PC-3 (cell line): ENCODE measurements at regions of chr1 and their contacts with region 1.

Region 1: DNA sequence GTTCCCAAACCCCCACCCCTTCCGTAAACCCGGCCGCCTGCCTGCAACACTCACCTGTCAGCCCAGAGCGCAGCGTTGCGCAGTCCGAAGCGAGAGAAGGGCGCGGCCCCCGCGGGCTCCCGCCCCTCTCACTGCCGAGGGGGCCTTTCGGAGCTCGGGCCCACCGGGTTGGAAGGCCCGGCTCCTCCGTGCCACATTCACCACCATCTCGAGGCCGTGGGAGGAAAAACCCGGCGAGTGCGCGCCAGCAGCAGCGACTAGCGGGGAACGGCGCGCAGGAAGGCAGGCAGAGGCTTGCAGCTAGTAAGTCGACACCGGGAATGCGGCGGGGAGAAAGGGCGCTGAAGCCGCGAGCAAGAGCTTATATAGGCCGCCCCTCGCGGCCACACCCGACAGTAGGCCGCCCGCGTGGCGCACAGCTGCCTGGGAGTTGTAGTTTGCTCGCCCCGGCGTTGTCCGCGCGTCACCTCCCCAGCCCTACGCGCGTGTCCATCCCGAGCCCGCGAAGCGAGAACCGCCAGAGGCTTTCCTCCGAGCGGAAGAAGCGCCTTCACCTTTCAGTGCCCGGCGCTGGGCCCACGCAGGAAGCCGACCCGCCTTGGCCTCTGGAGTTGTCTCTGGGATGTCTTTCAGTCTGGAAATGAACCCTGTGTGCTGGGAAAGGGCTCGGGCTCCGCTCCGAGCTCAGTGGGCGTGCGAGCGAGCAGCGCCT is 10.4 kb upstream of the RAB42 start:
- DNase-seq: peak; percentile 95
- ATAC-seq: peak; percentile 94
- H3K4me3 ChIP-seq: peak overlapping the region; percentile 99
- H3K27ac ChIP-seq: peak overlapping the region; percentile 66
- H3K4me1 ChIP-seq: peaks cover 15% of the 10 kb centered on the region
- H3K27me3 ChIP-seq: no peaks in the 10 kb centered on the region
- CTCF ChIP-seq: 0 out of 2 replicates have a peak, but pooled peaks have one; percentile 7

Region 2: DNA sequence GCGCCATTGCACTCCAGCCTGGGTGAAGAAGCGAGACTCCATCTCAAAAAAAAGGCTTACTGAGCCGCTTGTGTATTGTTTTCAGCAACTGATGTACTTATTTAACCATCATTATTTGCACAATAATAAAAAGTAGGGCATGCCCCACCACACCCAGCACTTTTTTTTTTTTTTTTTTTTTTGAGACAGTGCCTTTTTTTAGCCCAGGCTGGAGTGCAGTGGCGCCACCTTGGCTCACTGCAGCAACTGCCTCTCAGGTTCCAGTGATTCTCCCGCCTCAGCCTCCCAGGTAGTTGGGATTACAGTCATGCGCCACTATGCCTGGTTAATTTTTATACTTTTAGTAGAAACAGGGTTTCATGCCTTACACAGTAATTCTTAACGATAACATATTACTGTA is 41.0 kb before region 1 on chr1:
- CTCF ChIA-PET with region 1: no interaction called
- POLR2A ChIA-PET with region 1: no interaction called
- intact Hi-C with region 1: no loop called
- DNase-seq: peak; percentile 46
- ATAC-seq: peak; percentile 56
- H3K4me3 ChIP-seq: no peak overlapping the region
- H3K27ac ChIP-seq: no peak overlapping the region
- H3K4me1 ChIP-seq: no peaks in the 10 kb centered on the region
- H3K27me3 ChIP-seq: no peaks in the 10 kb centered on the region
- CTCF ChIP-seq: peak; percentile 59

Region 3: GRCh38 chr1:28552758-28553663 is 28.7 kb before region 1 on chr1 and contains the start of gene TRNAU1AP:
- CTCF ChIA-PET with region 1: interaction called, 4 read pairs
- POLR2A ChIA-PET with region 1: interaction called, 6 read pairs
- intact Hi-C with region 1: loop called (anchors 1 kb)
- DNase-seq: peak; percentile 98
- ATAC-seq: peak; percentile 92
- H3K4me3 ChIP-seq: peak within 1 kb of the TSS; percentile 95
- H3K27ac ChIP-seq: peak within 1 kb of the TSS; percentile 45
- H3K4me1 ChIP-seq: peaks cover 8% of the 10 kb centered on the region; the same call in 1 of the 2 replicates
- H3K27me3 ChIP-seq: no peaks in the 10 kb centered on the region
- CTCF ChIP-seq: no peak
- total RNA-seq, gene TRNAU1AP: 19.6 and 27.2 TPM in 2 replicates

Region 4: GRCh38 chr1:28591708-28592320 is 10.1 kb after region 1 on chr1 and contains the start of gene RAB42:
- CTCF ChIA-PET with region 1: no interaction called
- POLR2A ChIA-PET with region 1: interaction called, 10 read pairs
- intact Hi-C with region 1: no loop called
- DNase-seq: no peak
- ATAC-seq: no peak
- H3K4me3 ChIP-seq: peak within 1 kb of the TSS; percentile 66
- H3K27ac ChIP-seq: no peak within 1 kb of the TSS
- H3K4me1 ChIP-seq: peaks cover 17% of the 10 kb centered on the region
- H3K27me3 ChIP-seq: no peaks in the 10 kb centered on the region
- CTCF ChIP-seq: no peak
- total RNA-seq, gene RAB42: 1.5 and 4.7 TPM in 2 replicates